ENCODE measurements at regions of chrX and their contacts with region 1.

Region 1: DNA sequence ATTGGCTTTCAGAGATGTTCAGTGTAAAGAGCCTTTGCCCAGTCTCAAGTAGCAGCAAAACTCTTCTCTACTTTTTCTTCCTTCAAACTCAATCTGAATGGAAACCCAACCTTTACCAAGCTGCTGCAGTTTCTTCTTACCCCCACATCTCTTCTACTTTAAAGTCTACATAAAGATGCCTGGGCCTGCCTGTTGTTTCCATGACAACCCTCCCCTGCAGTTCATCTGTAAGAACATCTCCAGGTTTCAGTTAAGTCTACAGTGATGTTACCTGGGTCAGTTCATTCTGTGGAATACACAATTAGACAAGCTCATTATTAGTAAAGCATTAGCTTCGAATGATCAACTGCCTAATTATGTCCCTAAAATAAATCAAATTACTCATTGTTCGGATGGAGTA is 81.3 kb downstream of the SPANXN3 start:
- DNase-seq: no peak
- H3K4me3 ChIP-seq: no peak overlapping the region
- H3K27ac ChIP-seq: no peak overlapping the region
- H3K4me1 ChIP-seq: no peaks in the 10 kb centered on the region
- H3K27me3 ChIP-seq: no peaks in the 10 kb centered on the region
- CTCF ChIP-seq: no peak
- POLR2A ChIP-seq: no peak

Region 2: DNA sequence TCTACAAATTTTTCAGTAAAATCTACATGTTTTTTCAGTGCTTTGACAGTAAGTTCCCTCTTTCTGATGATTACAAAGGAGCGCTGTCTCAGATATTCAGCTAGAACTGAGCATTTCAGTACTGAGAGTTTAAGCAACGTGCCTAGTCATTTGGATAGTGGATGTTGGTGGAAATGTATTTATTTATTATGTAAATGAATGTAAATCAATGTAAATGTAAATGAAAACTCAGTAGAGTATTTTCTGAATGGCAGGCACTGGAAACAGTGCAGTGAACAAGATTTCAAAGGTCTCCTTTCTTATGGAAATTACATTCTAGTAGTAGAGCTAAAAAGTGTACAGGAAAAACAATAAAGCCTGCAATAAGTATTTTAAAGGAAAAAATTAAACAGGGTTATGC is 780.4 kb before region 1 on chrX:
- intact Hi-C with region 1: no loop called
- DNase-seq: no peak
- H3K4me3 ChIP-seq: no peak overlapping the region
- H3K27ac ChIP-seq: no peak overlapping the region
- H3K4me1 ChIP-seq: no peaks in the 10 kb centered on the region
- H3K27me3 ChIP-seq: no peaks in the 10 kb centered on the region
- CTCF ChIP-seq: no peak
- POLR2A ChIP-seq: no peak

Region 3: GRCh38 chrX:143455046-143455445 is 19.1 kb after region 1 on chrX:
- intact Hi-C with region 1: loop called (anchors 2 kb)
- DNase-seq: no peak
- H3K4me3 ChIP-seq: no peak overlapping the region
- H3K27ac ChIP-seq: no peak overlapping the region
- H3K4me1 ChIP-seq: no peaks in the 10 kb centered on the region
- H3K27me3 ChIP-seq: no peaks in the 10 kb centered on the region
- CTCF ChIP-seq: no peak
- POLR2A ChIP-seq: no peak